Activated CD4-positive, alpha-beta T cell treated with anti-CD3 and anti-CD28 coated beads for 36 hours (primary cell): ENCODE measurements at regions of chr2 and their contacts with region 1.

Region 1: DNA sequence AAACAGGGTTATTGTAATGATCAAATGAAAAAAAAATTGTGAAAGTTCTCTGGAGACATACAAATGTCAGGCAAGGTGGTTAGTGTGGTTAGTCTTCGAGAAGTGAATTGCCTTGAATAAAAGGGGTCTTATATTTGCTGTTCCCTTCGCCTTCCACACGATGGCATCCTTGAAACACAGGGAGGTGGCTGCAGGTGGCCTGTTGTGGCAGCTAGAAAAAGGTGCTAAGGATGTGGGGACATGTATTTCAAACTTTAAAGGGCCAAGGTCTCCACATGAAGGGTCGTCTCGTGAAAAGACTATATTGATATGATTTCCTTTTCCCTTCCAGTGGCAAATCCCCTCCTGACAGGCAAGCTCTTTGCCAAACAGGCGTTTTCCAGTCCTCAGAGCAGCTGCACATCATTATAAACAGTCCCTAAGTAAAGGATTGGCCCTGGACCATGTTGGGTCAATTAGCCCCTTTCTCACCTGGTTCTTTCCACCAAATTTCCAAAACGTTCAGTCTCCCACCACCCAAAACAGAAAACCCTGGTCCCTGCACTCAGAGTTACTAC is 68.5 kb downstream of the COPS8 start:
- DNase-seq: peak; percentile 78
- ATAC-seq: peak; percentile 7
- H3K4me3 Mint-ChIP-seq: no peak overlapping the region
- H3K27ac Mint-ChIP-seq: no peak overlapping the region
- H3K4me1 Mint-ChIP-seq: peaks cover 44% of the 10 kb centered on the region
- H3K27me3 Mint-ChIP-seq: peaks cover 4% of the 10 kb centered on the region

Region 2: DNA sequence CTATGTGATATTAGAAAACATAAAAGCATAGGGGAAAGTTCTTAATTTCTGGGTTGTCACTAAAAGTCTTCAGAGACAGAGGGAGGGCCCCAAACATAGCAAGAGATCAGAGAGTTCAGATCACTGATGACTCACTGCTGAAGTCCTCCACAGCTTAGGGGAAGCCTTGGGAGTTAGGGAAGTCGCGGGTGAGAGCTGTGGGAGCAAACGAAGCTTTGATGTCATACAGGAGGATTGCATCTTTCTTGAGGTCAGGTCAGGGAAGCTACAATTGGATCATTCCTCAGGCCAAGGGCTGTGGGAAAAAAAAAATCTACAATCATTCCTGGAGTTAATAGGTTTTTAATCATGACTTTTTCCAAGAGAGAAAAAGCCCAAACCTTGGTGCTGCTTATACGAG is 27.7 kb after region 1 on chr2:
- CTCF ChIA-PET with region 1: no interaction called
- POLR2A ChIA-PET with region 1: no interaction called
- intact Hi-C with region 1: no loop called
- DNase-seq: no peak
- ATAC-seq: no peak
- H3K4me3 Mint-ChIP-seq: no peak overlapping the region
- H3K27ac Mint-ChIP-seq: no peak overlapping the region
- H3K4me1 Mint-ChIP-seq: no peaks in the 10 kb centered on the region
- H3K27me3 Mint-ChIP-seq: peaks cover 17% of the 10 kb centered on the region

Region 3: GRCh38 chr2:237227592-237228280 is 73.6 kb after region 1 on chr2:
- CTCF ChIA-PET with region 1: no interaction called
- POLR2A ChIA-PET with region 1: no interaction called
- intact Hi-C with region 1: loop called in 1 of 2 experiments (anchors 5 kb)
- DNase-seq: peak; percentile 54
- ATAC-seq: peak; percentile 90
- H3K4me3 Mint-ChIP-seq: no peak overlapping the region
- H3K27ac Mint-ChIP-seq: no peak overlapping the region
- H3K4me1 Mint-ChIP-seq: peaks cover 11% of the 10 kb centered on the region
- H3K27me3 Mint-ChIP-seq: peaks cover 26% of the 10 kb centered on the region

Region 4: DNA sequence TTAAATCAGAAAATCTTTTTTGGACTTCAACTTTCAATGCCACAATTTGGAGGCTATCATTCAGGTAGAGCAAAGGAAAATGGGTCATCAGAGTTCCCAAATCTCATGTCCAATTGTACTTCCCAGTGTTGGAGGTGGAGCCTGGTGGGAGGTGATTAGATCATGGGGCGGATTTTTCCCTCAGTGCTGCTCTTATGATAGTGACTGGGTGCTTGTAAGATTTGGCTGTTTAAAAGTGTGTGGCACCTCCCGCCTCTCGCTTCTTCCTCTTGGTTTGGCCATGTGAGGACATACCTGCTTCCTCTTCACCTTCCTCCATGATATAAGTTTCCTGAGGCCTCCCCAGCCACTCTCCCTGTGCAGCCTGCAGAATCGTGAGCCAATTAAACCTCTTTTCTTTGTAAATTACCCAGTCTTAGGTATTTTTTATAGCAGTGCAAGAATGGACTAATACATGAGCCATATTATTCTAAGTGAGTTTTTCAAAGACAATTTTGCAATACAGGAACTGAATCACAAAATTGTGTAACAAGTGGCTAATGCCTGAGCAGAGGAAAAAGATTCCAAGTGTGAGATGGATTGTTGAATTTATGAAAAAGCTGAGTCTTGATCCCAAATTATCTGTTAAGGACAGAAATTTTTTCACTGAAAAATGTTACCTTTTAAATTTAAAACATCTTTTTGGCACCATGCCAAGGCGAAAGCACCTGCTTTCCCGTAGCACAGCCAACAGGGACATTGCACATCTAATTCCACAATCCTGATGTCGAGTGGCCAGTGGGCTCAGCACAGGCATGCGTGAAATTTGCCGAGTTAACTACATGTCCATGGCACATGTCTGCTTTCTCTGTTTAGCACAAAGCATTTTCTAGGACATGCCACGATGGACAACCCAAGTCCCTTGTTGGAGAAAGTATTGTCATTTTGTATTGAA is 108.9 kb after region 1 on chr2:
- CTCF ChIA-PET with region 1: no interaction called
- POLR2A ChIA-PET with region 1: no interaction called
- intact Hi-C with region 1: no loop called
- DNase-seq: no peak
- ATAC-seq: no peak
- H3K4me3 Mint-ChIP-seq: no peak overlapping the region
- H3K27ac Mint-ChIP-seq: no peak overlapping the region
- H3K4me1 Mint-ChIP-seq: peaks cover 1% of the 10 kb centered on the region
- H3K27me3 Mint-ChIP-seq: peaks cover 2% of the 10 kb centered on the region

Region 5: DNA sequence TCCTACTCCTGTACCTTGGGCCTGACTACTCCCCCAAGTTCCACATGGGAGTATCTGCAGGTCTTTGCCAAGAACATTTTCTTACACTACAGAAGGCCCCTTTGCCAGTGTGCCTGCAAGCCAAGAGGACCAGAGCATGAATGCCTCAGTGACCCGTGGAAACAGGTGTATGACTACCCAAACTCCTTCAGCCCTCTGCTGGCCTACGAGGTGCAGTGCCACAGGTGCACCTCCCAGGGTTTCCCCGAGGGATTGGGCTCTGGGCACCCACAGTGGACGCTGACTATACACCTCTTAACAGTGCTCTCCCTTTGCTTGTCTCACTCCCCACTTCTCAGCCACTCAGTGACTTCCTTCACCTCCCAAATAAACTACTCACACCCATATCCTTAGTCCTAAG is 168.4 kb after region 1 on chr2:
- CTCF ChIA-PET with region 1: no interaction called
- POLR2A ChIA-PET with region 1: no interaction called
- intact Hi-C with region 1: loop called in 1 of 2 experiments (anchors 1 kb)
- DNase-seq: peak; percentile 40
- ATAC-seq: peak; percentile 65
- H3K4me3 Mint-ChIP-seq: no peak overlapping the region
- H3K27ac Mint-ChIP-seq: no peak overlapping the region
- H3K4me1 Mint-ChIP-seq: no peaks in the 10 kb centered on the region
- H3K27me3 Mint-ChIP-seq: no peaks in the 10 kb centered on the region

Region 6: DNA sequence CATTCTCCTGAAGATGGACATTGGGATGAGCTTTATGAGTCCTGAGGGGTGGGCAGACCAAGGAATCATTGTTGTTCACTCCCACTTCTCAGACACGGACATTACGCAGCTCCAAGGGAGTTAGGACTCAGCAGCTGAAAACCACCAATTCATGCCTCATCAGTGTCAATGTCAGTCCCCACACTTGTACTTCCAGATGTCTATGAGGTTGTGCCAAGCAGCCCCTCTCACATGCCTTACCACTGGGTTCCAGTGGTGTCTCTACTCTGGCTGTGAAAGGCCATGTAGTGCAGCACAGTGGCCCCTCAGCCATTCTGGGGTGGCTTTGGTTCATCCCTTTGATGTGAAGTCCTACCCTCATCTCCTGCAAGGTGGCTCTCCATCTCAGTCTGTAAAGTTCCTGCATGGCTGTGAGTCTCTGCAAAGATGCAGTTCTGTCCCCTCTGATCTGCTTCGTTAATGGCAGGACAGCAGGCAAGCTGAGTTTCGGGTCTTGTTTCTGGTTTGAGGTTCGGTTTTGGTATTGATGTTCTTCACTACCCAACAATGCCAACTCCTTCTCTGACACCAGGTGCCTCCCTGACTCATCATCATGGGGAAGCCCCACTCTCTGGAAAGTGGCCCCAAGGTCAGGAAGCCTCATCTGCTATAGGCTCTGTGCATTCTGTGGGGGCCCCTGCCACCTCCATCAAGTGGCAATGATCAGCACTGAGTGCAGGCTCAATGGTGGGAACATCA is 273.8 kb after region 1 on chr2:
- CTCF ChIA-PET with region 1: interaction called, 3 read pairs
- POLR2A ChIA-PET with region 1: no interaction called
- intact Hi-C with region 1: loop called (anchors 2 kb)
- DNase-seq: peak; percentile 92
- ATAC-seq: peak; percentile 79
- H3K4me3 Mint-ChIP-seq: peak overlapping the region; percentile 34
- H3K27ac Mint-ChIP-seq: peak overlapping the region; percentile 97
- H3K4me1 Mint-ChIP-seq: peaks cover 91% of the 10 kb centered on the region
- H3K27me3 Mint-ChIP-seq: peaks cover 2% of the 10 kb centered on the region

Region 7: DNA sequence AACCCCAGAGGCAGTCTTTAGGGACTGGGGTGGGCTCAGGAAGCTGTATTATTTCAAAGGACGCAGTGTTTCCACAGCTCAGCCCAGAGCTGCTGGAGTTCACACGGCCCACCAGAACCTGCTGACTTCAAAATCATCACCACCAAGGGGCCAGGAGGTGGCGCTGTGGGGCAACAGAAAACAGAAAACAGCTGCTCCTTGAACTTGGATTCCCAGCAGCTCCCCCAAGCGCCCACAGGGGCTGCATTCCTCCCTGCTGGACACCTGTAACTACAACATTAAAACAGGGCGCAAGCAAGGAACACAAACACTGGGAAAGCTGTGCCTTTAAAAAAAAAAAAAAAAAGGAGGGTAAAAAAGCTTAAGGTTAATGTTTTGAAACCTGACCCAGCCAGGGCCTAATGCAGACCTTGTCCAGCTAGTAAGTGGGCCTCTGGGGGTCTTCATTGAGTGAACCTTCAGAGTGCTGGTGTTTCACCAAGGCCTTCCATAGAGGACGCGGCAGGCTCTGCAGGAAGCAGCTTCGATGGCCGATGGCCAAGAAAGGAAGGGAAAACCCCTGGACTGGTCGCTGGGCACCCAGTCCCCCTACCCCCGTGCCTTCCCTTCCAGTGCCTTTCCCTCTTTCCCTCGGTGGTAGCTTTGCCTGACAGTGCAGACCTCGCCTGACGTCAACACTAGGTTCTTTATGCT is 358.8 kb after region 1 on chr2:
- CTCF ChIA-PET with region 1: no interaction called
- POLR2A ChIA-PET with region 1: no interaction called
- intact Hi-C with region 1: loop called in 1 of 2 experiments (anchors 1 kb)
- DNase-seq: peak; percentile 90
- ATAC-seq: peak; percentile 92
- H3K4me3 Mint-ChIP-seq: no peak overlapping the region
- H3K27ac Mint-ChIP-seq: no peak overlapping the region
- H3K4me1 Mint-ChIP-seq: no peaks in the 10 kb centered on the region
- H3K27me3 Mint-ChIP-seq: no peaks in the 10 kb centered on the region